ENCODE measurements at regions of chr5 and their contacts with region 1.

Region 1: GRCh38 chr5:36928947-36929346 is 52.4 kb downstream of the NIPBL start:
- DNase-seq: no peak
- ATAC-seq: peak; percentile 86 to 87 (median 86)
- H3K4me3 ChIP-seq: no peak overlapping the region
- H3K27ac ChIP-seq: peak overlapping the region; percentile 63
- H3K4me1 ChIP-seq: peaks cover 76% of the 10 kb centered on the region
- H3K27me3 ChIP-seq: no peaks in the 10 kb centered on the region
- CTCF ChIP-seq: no peak

Region 2: GRCh38 chr5:36885566-36886485 is 43.1 kb before region 1 on chr5:
- intact Hi-C with region 1: loop called in 1 of 2 experiments (anchors 5 kb)
- DNase-seq: no peak
- ATAC-seq: no peak
- H3K4me3 ChIP-seq: no peak overlapping the region
- H3K27ac ChIP-seq: no peak overlapping the region
- H3K4me1 ChIP-seq: peaks cover 66% of the 10 kb centered on the region
- H3K27me3 ChIP-seq: no peaks in the 10 kb centered on the region
- CTCF ChIP-seq: no peak

Measured in psoas muscle (tissue), 8 donors.